ENCODE measurements at regions of chrX and their contacts with region 1.

Region 1: GRCh38 chrX:134396174-134396573 is 63.8 kb upstream of the HPRT1 start:
- DNase-seq: peak; percentile 8
- H3K4me3 ChIP-seq: no peak overlapping the region
- H3K27ac ChIP-seq: no peak overlapping the region
- H3K4me1 ChIP-seq: no peaks in the 10 kb centered on the region
- CTCF ChIP-seq: peak; percentile 85

Region 2: DNA sequence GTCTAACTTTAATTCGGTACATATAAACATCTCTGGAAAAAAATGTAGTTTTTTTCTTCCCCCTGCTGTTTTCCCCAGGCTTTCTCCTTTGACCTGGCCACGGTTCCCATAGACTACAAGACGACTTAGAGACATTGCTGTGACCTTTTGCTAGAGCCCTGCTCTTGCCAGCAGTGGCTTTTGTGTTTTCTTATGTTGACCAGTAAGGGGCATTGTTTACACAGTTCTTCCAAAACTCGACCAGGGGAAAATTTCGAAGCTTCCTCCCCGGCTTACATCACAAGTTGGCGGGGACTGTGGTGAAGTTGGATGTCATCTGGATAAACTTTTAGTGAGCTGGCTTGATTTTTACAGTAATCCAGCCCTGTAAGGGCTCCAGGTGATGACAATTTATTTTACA is 149.9 kb before region 1 on chrX:
- CTCF ChIA-PET with region 1: no interaction called
- POLR2A ChIA-PET with region 1: no interaction called
- intact Hi-C with region 1: loop called (anchors 5 kb)
- DNase-seq: peak; percentile 18
- H3K4me3 ChIP-seq: no peak overlapping the region
- H3K27ac ChIP-seq: no peak overlapping the region
- H3K4me1 ChIP-seq: no peaks in the 10 kb centered on the region
- CTCF ChIP-seq: peak; percentile 39

Region 3: GRCh38 chrX:134377537-134377936 is 18.6 kb before region 1 on chrX:
- CTCF ChIA-PET with region 1: interaction called, 4 read pairs
- POLR2A ChIA-PET with region 1: interaction called, 3 read pairs
- intact Hi-C with region 1: loop called (anchors 1 kb)
- DNase-seq: peak; percentile 68
- H3K4me3 ChIP-seq: no peak overlapping the region
- H3K27ac ChIP-seq: no peak overlapping the region
- H3K4me1 ChIP-seq: peaks cover 8% of the 10 kb centered on the region
- CTCF ChIP-seq: peak; percentile 79